ENCODE measurements at regions of chr3 and their contacts with region 1.

Region 1: GRCh38 chr3:157081681-157082210 is 78.2 kb downstream of the CCNL1 start:
- DNase-seq: peak; percentile 83 to 97
- H3K4me3 ChIP-seq: no peak overlapping the region
- H3K4me1 ChIP-seq: peaks cover 10% of the 10 kb centered on the region
- H3K27me3 ChIP-seq: no peaks in the 10 kb centered on the region

Region 2: GRCh38 chr3:156535162-156535627 is 546.6 kb before region 1 on chr3:
- in situ Hi-C with region 1: loop called (anchors 25 kb)
- DNase-seq: peak in 1 of 2 experiments; percentile 28
- H3K4me3 ChIP-seq: no peak overlapping the region
- H3K4me1 ChIP-seq: no peaks in the 10 kb centered on the region
- H3K27me3 ChIP-seq: no peaks in the 10 kb centered on the region

Region 3: GRCh38 chr3:156674911-156675829 is 406.6 kb before region 1 on chr3:
- in situ Hi-C with region 1: loop called (anchors 5 kb)
- DNase-seq: peak; percentile 38 to 72
- H3K4me3 ChIP-seq: peak overlapping the region; percentile 76
- H3K4me1 ChIP-seq: peaks cover 28% of the 10 kb centered on the region
- H3K27me3 ChIP-seq: no peaks in the 10 kb centered on the region

Region 4: GRCh38 chr3:157572559-157573270 is 491.0 kb after region 1 on chr3:
- in situ Hi-C with region 1: no loop called
- DNase-seq: peak; percentile 55 to 67
- H3K4me3 ChIP-seq: no peak overlapping the region
- H3K4me1 ChIP-seq: no peaks in the 10 kb centered on the region
- H3K27me3 ChIP-seq: peaks cover 6% of the 10 kb centered on the region; the same call in 1 of the 2 replicates